ENCODE measurements at regions of chr5 and their contacts with region 1.

Region 1: DNA sequence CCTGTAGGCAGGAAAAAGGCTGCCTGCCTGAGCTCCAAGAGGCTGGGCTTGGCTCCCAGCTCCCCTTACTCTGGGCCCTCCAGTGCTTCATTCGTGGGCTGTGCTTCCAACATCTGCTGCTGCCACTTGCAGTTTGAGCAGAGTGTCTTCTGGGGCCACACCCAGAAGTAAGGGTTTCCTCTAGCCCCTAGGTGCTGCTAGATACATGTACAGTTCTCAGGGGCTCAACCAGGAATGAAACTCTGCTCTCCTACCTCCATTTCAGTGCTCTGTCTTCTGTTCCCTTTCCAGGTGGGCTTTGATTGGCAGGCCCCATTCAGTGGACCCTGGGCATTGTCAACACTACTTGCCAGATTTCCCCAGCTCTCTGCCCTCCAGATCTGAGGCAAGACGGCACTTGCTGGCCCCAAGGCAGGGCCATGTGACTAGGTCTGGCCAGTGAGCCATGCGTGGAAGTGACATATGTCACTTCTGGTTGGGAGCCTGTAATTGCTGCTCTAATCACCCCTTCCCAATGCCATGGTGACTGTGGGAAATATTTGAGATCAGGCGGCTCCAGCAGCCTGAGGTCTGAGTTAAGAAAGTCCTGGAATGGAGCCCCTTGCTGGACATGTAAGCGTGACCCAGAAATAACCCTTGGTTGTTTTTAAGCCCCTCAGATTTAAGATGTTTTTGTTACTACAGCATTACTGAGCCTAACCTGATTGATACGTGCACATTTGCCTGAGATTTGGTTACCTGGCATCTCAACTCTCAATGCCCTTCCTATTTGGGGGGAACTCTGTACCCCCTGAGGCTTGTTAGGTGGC is 9.4 kb upstream of the BOD1 start:
- DNase-seq: no peak
- H3K4me3 ChIP-seq: no peak overlapping the region
- H3K27ac ChIP-seq: no peak overlapping the region
- H3K4me1 ChIP-seq: peaks cover 12 to 18% (median 16%) of the 10 kb centered on the region in 4 experiments
- H3K27me3 ChIP-seq: no peaks in the 10 kb centered on the region
- CTCF ChIP-seq: no peak
- EP300 ChIP-seq: no peak
- POLR2A ChIP-seq: no peak
- RAD21 ChIP-seq: 0 out of 4 replicates have a peak, but pooled peaks have one; percentile 3

Region 2: DNA sequence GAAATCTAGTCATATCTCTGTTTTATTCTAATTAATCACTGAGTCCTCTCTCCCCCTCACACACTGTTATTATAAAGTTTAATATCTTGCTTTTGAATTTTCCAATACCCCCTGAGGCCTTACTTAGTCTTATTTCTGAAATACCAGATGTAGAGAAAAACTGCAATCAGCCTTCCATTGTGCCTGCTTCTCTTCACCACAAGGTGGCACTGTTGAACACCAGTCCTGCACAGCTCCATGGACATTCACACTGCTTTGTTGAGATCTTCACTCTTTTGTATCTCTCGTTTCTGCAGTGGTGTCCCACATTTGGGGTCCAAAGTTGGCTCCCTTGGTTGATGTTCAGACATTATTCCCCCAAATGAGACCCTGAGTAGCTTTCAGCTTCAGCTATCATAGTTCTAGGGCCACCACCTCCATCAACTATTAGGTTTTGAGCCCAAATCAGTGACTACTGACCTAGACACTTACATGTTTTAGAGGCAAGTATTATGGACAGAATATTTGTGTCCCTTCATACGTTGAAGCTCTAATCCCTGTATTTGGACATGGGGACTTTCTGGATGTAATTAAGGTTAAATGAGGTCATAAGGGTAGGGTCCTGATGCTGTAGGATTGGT is 33.7 kb before region 1 on chr5:
- CTCF ChIA-PET with region 1: no interaction called
- POLR2A ChIA-PET with region 1: no interaction called
- DNase-seq: no peak
- H3K4me3 ChIP-seq: no peak overlapping the region
- H3K27ac ChIP-seq: no peak overlapping the region
- H3K4me1 ChIP-seq: no peaks in the 10 kb centered on the region; a peak in 1 of 7 replicates
- H3K27me3 ChIP-seq: no peaks in the 10 kb centered on the region
- CTCF ChIP-seq: peak; percentile 48 to 88 (median 66)
- EP300 ChIP-seq: no peak
- POLR2A ChIP-seq: no peak
- RAD21 ChIP-seq: peak; percentile 78 to 79

Region 3: GRCh38 chr5:173984218-173984617 is 358.3 kb after region 1 on chr5:
- CTCF ChIA-PET with region 1: interaction called, 11 read pairs
- POLR2A ChIA-PET with region 1: interaction called, 3 read pairs
- DNase-seq: peak in 1 of 2 experiments; percentile 50
- H3K4me3 ChIP-seq: no peak overlapping the region
- H3K27ac ChIP-seq: no peak overlapping the region
- H3K4me1 ChIP-seq: peaks cover 4 to 8% (median 5%) of the 10 kb centered on the region in 4 experiments; a peak in 4 of 7 replicates
- H3K27me3 ChIP-seq: no peaks in the 10 kb centered on the region
- CTCF ChIP-seq: peak; percentile 8 to 87 (median 80)
- EP300 ChIP-seq: no peak
- POLR2A ChIP-seq: no peak
- RAD21 ChIP-seq: peak; percentile 96